Heart left ventricle (tissue), 16 donors: ENCODE measurements at regions of chr13 and their contacts with region 1.

Region 1: DNA sequence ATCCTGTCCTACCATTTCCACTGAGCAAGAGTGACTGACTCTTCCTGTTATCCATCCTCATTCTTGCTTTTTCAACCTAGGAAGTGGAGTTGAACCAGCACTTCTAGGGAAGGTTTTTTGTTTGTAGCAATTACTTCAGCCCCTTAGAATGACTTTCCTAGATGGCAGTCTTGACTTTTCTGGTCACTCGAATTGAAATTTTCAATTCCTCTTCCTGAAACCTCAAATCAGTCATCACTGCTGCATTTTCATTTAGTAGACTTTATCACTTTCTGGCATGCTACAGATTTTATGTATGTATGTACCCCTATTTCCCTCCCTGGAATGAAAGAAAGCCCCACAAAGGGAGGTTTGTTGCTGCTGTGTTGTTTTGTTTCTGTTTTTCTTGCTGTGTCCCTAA is 915.9 kb downstream of the PCDH17 start:
- DNase-seq: no peak
- ATAC-seq: no peak
- H3K4me3 ChIP-seq: no peak overlapping the region
- H3K27ac ChIP-seq: no peak overlapping the region
- H3K4me1 ChIP-seq: no peaks in the 10 kb centered on the region
- H3K27me3 ChIP-seq: no peaks in the 10 kb centered on the region
- CTCF ChIP-seq: no peak
- POLR2A ChIP-seq: no peak

Region 2: GRCh38 chr13:58160980-58161379 is 386.4 kb before region 1 on chr13:
- intact Hi-C with region 1: no loop called
- DNase-seq: no peak
- ATAC-seq: no peak
- H3K4me3 ChIP-seq: no peak overlapping the region
- H3K27ac ChIP-seq: no peak overlapping the region
- H3K4me1 ChIP-seq: no peaks in the 10 kb centered on the region
- H3K27me3 ChIP-seq: no peaks in the 10 kb centered on the region
- CTCF ChIP-seq: no peak
- POLR2A ChIP-seq: no peak

Region 3: GRCh38 chr13:58254943-58255342 is 292.5 kb before region 1 on chr13:
- intact Hi-C with region 1: no loop called
- DNase-seq: no peak
- ATAC-seq: no peak
- H3K4me3 ChIP-seq: no peak overlapping the region
- H3K27ac ChIP-seq: no peak overlapping the region
- H3K4me1 ChIP-seq: no peaks in the 10 kb centered on the region
- H3K27me3 ChIP-seq: no peaks in the 10 kb centered on the region
- CTCF ChIP-seq: no peak
- POLR2A ChIP-seq: no peak

Region 4: DNA sequence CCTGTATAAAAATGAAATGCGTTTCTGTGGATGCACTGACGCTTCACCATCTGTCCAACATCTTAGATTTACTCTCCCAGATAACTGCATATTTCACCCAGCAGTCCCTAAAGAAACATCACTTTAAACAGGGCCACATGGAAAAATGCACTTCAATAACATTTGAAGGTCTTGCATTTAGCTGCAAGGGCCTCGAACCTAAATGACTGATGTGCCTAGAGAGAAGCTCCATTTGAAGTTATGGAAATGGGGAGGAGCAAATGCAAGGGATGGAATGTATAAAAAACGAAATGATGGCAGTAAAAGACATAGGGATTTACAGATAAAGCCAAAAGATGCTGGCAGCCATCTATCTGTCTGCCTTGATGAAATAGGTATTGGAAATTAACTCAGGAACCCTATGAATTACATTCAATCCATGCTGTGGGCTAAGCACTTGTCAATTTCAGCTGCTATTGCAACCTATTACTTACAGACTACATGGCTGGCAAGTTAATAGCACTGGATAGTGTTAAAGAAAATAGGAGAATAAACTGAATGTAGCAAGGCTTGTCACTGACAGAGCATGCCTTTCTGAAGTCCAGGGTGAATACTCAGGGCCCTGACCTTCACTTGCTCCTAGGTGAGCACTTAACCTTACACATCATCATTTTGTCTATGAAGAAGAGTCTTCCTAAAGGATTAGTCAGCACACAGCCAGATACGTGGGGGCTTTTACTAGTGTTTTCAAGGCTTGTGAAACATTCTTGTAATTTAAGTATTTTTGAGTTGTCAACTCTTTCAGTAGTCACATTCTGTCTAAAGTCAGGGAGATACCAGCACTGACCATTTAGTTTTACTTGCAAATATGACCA is 47.6 kb after region 1 on chr13:
- intact Hi-C with region 1: loop called in 1 of 10 experiments (anchors 2 kb)
- DNase-seq: no peak
- ATAC-seq: no peak
- H3K4me3 ChIP-seq: no peak overlapping the region
- H3K27ac ChIP-seq: no peak overlapping the region
- H3K4me1 ChIP-seq: no peaks in the 10 kb centered on the region
- H3K27me3 ChIP-seq: no peaks in the 10 kb centered on the region
- CTCF ChIP-seq: no peak
- POLR2A ChIP-seq: no peak

Region 5: GRCh38 chr13:58655086-58655485 is 107.7 kb after region 1 on chr13:
- intact Hi-C with region 1: no loop called
- DNase-seq: no peak
- ATAC-seq: no peak
- H3K4me3 ChIP-seq: no peak overlapping the region
- H3K27ac ChIP-seq: no peak overlapping the region
- H3K4me1 ChIP-seq: peaks cover 0 to 9% (median 0%) of the 10 kb centered on the region in 12 donors
- H3K27me3 ChIP-seq: no peaks in the 10 kb centered on the region
- CTCF ChIP-seq: no peak
- POLR2A ChIP-seq: no peak

Region 6: GRCh38 chr13:59332966-59333365 is 785.5 kb after region 1 on chr13:
- intact Hi-C with region 1: no loop called
- DNase-seq: no peak
- ATAC-seq: peak in 1 of 4 donors; percentile 74
- H3K4me3 ChIP-seq: no peak overlapping the region
- H3K27ac ChIP-seq: peak overlapping the region in 4 of 12 donors; percentile 11 to 30 (median 24)
- H3K4me1 ChIP-seq: peaks cover 0 to 17% (median 8%) of the 10 kb centered on the region in 12 donors
- H3K27me3 ChIP-seq: no peaks in the 10 kb centered on the region
- CTCF ChIP-seq: no peak
- POLR2A ChIP-seq: no peak